CD8-positive, alpha-beta T cell (primary cell): ENCODE measurements at regions of chr11 and their contacts with region 1.

Region 1: DNA sequence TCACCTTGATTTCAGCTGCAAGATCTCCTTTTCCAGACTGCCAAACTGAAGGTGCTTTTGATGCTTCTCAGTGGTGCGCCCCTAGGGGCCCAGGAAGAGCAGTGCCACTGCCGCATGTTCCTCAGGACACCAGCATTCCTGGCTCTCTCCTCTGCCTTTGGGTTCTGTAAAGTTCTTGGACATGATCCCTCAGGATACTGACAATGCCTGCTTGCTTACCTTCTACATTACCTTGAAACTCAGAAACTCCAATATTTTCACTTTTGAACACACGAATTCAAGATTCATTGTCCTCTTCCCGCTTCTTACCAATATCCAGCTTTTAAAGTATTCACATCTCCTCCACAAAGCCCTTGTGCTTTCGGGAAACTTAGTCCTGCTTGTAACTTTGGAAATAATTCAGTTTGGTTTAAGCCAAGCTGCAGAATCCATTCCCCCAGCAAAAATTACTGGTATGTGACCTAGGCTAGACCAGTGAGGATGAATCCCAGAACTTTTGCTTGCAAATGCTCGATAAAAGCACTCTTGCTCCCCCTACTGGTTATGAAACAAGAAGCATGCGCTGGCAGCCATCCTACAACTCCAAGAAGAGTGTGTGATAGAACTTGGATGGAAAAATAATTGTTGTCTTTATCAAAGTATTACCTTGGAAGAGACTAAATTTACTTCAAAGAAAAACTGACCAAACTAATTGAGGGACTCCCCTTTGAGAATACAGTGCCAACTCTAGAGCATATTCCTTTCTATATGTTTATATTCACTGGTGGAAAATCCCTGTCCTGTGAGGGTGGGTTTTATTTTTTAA is 16.5 kb upstream of the OR5B21 start:
- DNase-seq: peak in 8 of 9 experiments; percentile 17 to 85 (median 54)
- ATAC-seq: peak; percentile 71
- H3K4me3 ChIP-seq: peak overlapping the region in 1 of 2 experiments; percentile 24
- H3K4me3 Mint-ChIP-seq: peak overlapping the region; percentile 75
- H3K27ac ChIP-seq: peak overlapping the region; percentile 75 to 80
- H3K27ac Mint-ChIP-seq: peak overlapping the region; percentile 96
- H3K4me1 ChIP-seq: peaks cover 65% of the 10 kb centered on the region
- H3K4me1 Mint-ChIP-seq: peaks cover 69% of the 10 kb centered on the region
- H3K27me3 ChIP-seq: no peaks in the 10 kb centered on the region
- H3K27me3 Mint-ChIP-seq: no peaks in the 10 kb centered on the region
- CTCF ChIP-seq: peak; percentile 90

Region 2: GRCh38 chr11:57493507-57494503 is 1030.6 kb before region 1 on chr11:
- CTCF ChIA-PET with region 1: interaction called, 3 read pairs
- POLR2A ChIA-PET with region 1: no interaction called
- intact Hi-C with region 1: loop called in 1 of 2 experiments (anchors 5 kb)
- DNase-seq: peak; percentile 57 to 85 (median 76)
- ATAC-seq: peak; percentile 97
- H3K4me3 ChIP-seq: no peak overlapping the region
- H3K4me3 Mint-ChIP-seq: no peak overlapping the region
- H3K27ac ChIP-seq: no peak overlapping the region
- H3K27ac Mint-ChIP-seq: no peak overlapping the region
- H3K4me1 ChIP-seq: no peaks in the 10 kb centered on the region
- H3K4me1 Mint-ChIP-seq: no peaks in the 10 kb centered on the region
- H3K27me3 ChIP-seq: no peaks in the 10 kb centered on the region
- H3K27me3 Mint-ChIP-seq: peaks cover 2% of the 10 kb centered on the region
- CTCF ChIP-seq: peak; percentile 91

Region 3: GRCh38 chr11:57792060-57792541 is 732.3 kb before region 1 on chr11:
- CTCF ChIA-PET with region 1: interaction called, 7 read pairs
- POLR2A ChIA-PET with region 1: no interaction called
- intact Hi-C with region 1: loop called in 1 of 2 experiments (anchors 5 kb)
- DNase-seq: peak; percentile 78 to 95 (median 86)
- ATAC-seq: peak; percentile 95
- H3K4me3 ChIP-seq: peak overlapping the region in 1 of 2 experiments; percentile 21
- H3K4me3 Mint-ChIP-seq: peak overlapping the region; percentile 55
- H3K27ac ChIP-seq: peak overlapping the region; percentile 42 to 60
- H3K27ac Mint-ChIP-seq: peak overlapping the region; percentile 98
- H3K4me1 ChIP-seq: peaks cover 33% of the 10 kb centered on the region
- H3K4me1 Mint-ChIP-seq: peaks cover 36% of the 10 kb centered on the region
- H3K27me3 ChIP-seq: no peaks in the 10 kb centered on the region
- H3K27me3 Mint-ChIP-seq: no peaks in the 10 kb centered on the region
- CTCF ChIP-seq: no peak

Region 4: DNA sequence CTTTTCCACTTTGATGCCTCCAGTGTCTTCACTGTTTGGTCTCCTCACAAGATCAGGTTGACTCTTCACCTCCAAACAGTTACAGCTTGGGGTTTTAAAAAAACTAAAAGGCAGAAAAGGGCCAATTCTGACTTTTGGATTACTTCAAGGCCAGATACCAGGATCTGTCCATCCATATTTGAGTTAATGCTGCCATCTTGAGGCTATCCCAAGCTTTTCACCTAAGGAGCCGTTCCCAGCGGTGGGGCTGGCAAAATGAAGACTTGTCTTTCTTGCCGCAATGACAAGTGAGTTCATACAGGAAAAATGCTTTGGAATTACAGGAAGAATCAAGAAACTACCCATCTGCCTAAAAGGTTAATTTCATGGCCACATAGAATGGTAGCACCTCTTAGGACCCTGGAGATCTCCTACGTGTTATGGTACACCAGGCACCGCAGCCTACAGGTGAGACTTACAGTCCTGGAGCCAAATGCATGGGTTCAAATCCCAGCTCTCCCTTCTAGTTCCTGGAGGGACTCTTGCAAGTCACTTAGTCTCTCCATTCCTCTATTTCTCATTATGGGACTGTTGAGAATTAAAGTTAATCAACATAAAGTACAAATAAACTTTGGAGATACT is 10.6 kb before region 1 on chr11:
- CTCF ChIA-PET with region 1: interaction called, 15 read pairs
- POLR2A ChIA-PET with region 1: interaction called, 4 read pairs
- intact Hi-C with region 1: no loop called
- DNase-seq: peak in 3 of 9 experiments; percentile 23 to 62 (median 49)
- ATAC-seq: no peak
- H3K4me3 ChIP-seq: no peak overlapping the region
- H3K4me3 Mint-ChIP-seq: no peak overlapping the region
- H3K27ac ChIP-seq: no peak overlapping the region
- H3K27ac Mint-ChIP-seq: no peak overlapping the region
- H3K4me1 ChIP-seq: no peaks in the 10 kb centered on the region
- H3K4me1 Mint-ChIP-seq: peaks cover 5% of the 10 kb centered on the region
- H3K27me3 ChIP-seq: no peaks in the 10 kb centered on the region
- H3K27me3 Mint-ChIP-seq: no peaks in the 10 kb centered on the region
- CTCF ChIP-seq: peak; percentile 45

Region 5: GRCh38 chr11:58629857-58630256 is 105.4 kb after region 1 on chr11:
- CTCF ChIA-PET with region 1: interaction called, 14 read pairs
- POLR2A ChIA-PET with region 1: no interaction called
- intact Hi-C with region 1: no loop called
- DNase-seq: peak in 3 of 9 experiments; percentile 11 to 57 (median 43)
- ATAC-seq: no peak
- H3K4me3 ChIP-seq: no peak overlapping the region
- H3K4me3 Mint-ChIP-seq: no peak overlapping the region
- H3K27ac ChIP-seq: no peak overlapping the region
- H3K27ac Mint-ChIP-seq: no peak overlapping the region
- H3K4me1 ChIP-seq: no peaks in the 10 kb centered on the region
- H3K4me1 Mint-ChIP-seq: no peaks in the 10 kb centered on the region
- H3K27me3 ChIP-seq: no peaks in the 10 kb centered on the region
- H3K27me3 Mint-ChIP-seq: no peaks in the 10 kb centered on the region
- CTCF ChIP-seq: peak; percentile 53

Region 6: DNA sequence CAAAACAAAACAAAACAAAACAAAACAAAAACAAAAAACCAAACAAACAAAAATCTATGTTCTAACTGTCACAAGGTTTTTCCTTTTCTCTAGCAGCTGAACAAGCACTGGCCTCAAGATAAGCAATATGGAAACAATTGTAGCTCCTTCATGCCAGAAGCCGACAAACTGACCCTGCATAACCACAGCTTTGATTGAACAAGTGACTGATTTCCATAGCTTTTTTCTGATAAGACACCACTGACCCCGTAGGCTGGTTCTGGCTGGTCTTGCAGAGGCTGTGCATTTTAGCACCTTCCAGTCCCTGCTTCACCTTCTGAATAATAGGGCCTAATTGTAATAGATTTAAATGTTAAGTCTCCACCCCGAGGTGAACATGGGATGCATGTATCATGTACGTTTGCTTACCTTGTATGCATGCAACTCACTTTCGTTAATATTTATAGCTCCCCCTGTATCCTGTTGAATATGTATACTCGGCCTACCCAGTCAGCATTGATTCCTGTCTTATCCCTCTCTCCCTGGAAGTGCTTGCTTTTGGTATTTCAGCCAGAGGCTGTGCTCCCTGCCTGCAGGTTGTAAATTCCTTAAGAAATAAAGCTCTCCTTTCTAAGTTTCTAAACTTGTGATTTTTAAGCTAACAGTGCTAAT is 147.7 kb after region 1 on chr11:
- CTCF ChIA-PET with region 1: no interaction called
- POLR2A ChIA-PET with region 1: no interaction called
- intact Hi-C with region 1: no loop called
- DNase-seq: no peak
- ATAC-seq: no peak
- H3K4me3 ChIP-seq: no peak overlapping the region
- H3K4me3 Mint-ChIP-seq: no peak overlapping the region
- H3K27ac ChIP-seq: no peak overlapping the region
- H3K27ac Mint-ChIP-seq: no peak overlapping the region
- H3K4me1 ChIP-seq: no peaks in the 10 kb centered on the region
- H3K4me1 Mint-ChIP-seq: no peaks in the 10 kb centered on the region
- H3K27me3 ChIP-seq: no peaks in the 10 kb centered on the region
- H3K27me3 Mint-ChIP-seq: no peaks in the 10 kb centered on the region
- CTCF ChIP-seq: no peak